ENCODE measurements at regions of chr2 and their contacts with region 1.

Region 1: DNA sequence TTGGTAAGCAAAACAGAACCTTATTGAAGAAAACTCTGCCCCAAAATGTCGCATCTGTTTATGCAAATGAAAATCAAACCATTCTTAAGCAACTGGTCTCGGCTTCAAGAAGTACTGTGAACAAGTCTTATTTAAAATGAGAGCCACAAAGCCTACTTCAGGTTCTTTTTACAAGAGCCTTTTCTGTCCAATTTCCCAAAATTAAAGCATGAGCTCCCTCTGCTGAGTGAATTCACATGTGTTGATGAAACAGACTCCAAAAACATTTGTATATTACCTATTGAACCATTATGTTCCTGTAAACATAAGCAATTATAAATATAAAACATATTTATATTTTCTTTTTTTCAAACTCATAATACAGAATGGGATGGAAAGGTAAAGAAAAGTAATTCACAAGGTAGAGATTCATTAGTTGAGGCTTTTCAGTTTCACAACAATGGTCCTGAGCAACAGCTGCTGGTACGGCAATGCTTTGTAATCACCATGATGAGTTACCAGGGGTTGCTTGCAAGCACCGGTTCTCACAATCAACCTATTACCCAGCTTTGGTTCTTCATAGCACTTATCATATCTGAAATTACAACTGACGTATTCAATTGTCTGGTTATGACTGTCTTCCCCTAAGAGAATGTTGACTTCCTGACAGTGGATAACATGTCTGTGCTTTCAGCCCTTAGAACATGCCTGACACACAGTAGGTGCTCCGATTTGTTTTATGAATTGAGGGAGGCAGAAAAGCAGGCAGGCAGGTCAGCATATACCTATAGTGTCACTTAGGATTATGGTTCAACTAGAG is 108.4 kb upstream of the BZW1 start:
- DNase-seq: peak; percentile 4
- H3K4me3 Mint-ChIP-seq: peak overlapping the region; percentile 35
- H3K27ac Mint-ChIP-seq: peak overlapping the region; percentile 82
- H3K4me1 Mint-ChIP-seq: peaks cover 48% of the 10 kb centered on the region
- H3K27me3 Mint-ChIP-seq: no peaks in the 10 kb centered on the region

Region 2: GRCh38 chr2:199955339-199956261 is 747.7 kb before region 1 on chr2 and contains the starts of genes MAIP1 and TYW5:
- intact Hi-C with region 1: loop called (anchors 5 kb)
- DNase-seq: peak; percentile 73
- H3K4me3 Mint-ChIP-seq: peak within 1 kb of the TSS; percentile 99
- H3K27ac Mint-ChIP-seq: peak within 1 kb of the TSS; percentile 93
- H3K4me1 Mint-ChIP-seq: peaks cover 62% of the 10 kb centered on the region
- H3K27me3 Mint-ChIP-seq: no peaks in the 10 kb centered on the region
- total RNA-seq, gene MAIP1: 24.7 and 27.1 TPM in 2 replicates
- total RNA-seq, gene TYW5: 11.7 and 13.9 TPM in 2 replicates

Region 3: DNA sequence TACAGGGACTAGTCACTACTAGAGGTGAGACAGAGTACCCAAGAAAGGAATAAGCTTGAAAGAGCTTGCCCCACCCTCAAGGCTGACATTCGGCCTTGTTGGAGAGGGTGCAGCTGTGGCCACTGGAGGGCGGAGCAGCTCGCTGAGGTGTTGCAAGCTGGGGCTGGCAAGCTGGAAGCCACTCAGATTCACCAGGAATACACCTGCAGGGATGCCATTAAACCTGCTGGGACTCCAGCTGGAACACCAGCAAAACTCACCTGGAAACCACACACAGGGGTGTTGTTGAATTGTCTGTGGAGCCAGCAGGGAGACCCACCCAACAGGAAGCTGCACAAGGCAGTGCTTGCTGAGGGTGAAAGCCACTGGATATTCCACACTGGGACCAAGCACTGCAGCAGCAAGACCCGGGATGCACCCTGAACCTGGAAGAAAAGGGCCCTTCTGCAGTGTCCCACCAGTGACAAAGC is 219.6 kb before region 1 on chr2:
- intact Hi-C with region 1: loop called (anchors 1 kb)
- DNase-seq: no peak
- H3K4me3 Mint-ChIP-seq: no peak overlapping the region
- H3K27ac Mint-ChIP-seq: no peak overlapping the region
- H3K4me1 Mint-ChIP-seq: peaks cover 7% of the 10 kb centered on the region
- H3K27me3 Mint-ChIP-seq: no peaks in the 10 kb centered on the region

Region 4: GRCh38 chr2:200509612-200510433 is 193.5 kb before region 1 on chr2 and contains the start of gene KCTD18:
- intact Hi-C with region 1: loop called (anchors 1 kb)
- DNase-seq: peak; percentile 90
- H3K4me3 Mint-ChIP-seq: peak within 1 kb of the TSS; percentile 96
- H3K27ac Mint-ChIP-seq: peak within 1 kb of the TSS; percentile 90
- H3K4me1 Mint-ChIP-seq: peaks cover 21% of the 10 kb centered on the region
- H3K27me3 Mint-ChIP-seq: no peaks in the 10 kb centered on the region
- total RNA-seq, gene KCTD18: 14.5 and 15.8 TPM in 2 replicates

Region 5: DNA sequence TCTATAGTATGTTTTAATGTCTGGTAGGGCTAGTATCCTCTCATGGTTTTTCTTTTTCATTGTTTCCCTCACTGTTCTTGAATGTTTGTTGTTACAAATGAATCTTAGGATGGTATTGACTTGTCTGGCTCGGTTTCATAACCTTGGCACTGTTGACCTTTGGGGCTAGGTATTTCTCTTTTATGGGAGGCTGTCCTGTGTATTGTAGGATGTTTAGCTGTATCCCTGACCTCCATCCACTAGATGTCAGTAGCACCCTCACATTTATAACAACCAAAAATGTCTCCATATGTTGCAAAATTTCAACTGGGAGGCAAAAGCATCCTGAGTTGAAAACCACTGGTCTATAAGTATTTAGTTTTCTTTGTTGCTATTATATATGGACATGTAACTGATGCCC is 124.5 kb before region 1 on chr2:
- intact Hi-C with region 1: loop called (anchors 1 kb)
- DNase-seq: no peak
- H3K4me3 Mint-ChIP-seq: no peak overlapping the region
- H3K27ac Mint-ChIP-seq: no peak overlapping the region
- H3K4me1 Mint-ChIP-seq: peaks cover 18% of the 10 kb centered on the region
- H3K27me3 Mint-ChIP-seq: no peaks in the 10 kb centered on the region

Region 6: DNA sequence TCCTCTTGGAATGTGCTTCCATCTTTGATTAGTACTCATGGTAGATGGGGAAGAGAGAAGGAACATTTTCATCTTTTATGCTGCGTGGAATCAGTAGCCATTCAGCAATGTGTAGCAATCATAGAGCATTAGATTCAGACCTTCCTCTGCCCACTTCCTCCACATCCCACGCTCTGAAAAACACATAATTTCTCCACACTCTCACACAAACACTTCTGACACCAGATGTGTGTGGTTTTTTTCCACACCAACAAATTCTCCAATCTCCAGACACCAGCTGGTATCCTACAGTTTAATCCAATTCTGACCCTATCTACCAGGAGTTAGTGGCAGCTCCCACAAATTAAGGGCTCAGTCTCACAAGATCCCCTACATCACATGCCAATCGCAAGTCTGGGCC is 14.2 kb before region 1 on chr2:
- intact Hi-C with region 1: no loop called
- DNase-seq: no peak
- H3K4me3 Mint-ChIP-seq: no peak overlapping the region
- H3K27ac Mint-ChIP-seq: peak overlapping the region; percentile 49
- H3K4me1 Mint-ChIP-seq: peaks cover 10% of the 10 kb centered on the region
- H3K27me3 Mint-ChIP-seq: peaks cover 3% of the 10 kb centered on the region

Region 7: GRCh38 chr2:200765139-200765951 is 62.0 kb after region 1 on chr2:
- intact Hi-C with region 1: loop called (anchors 1 kb)
- DNase-seq: no peak
- H3K4me3 Mint-ChIP-seq: no peak overlapping the region
- H3K27ac Mint-ChIP-seq: peak overlapping the region; percentile 82
- H3K4me1 Mint-ChIP-seq: peaks cover 29% of the 10 kb centered on the region
- H3K27me3 Mint-ChIP-seq: no peaks in the 10 kb centered on the region

Region 8: GRCh38 chr2:200888704-200889625 is 185.6 kb after region 1 on chr2 and contains the starts of genes NIF3L1 and PPIL3:
- intact Hi-C with region 1: loop called (anchors 1 kb)
- DNase-seq: peak; percentile 96
- H3K4me3 Mint-ChIP-seq: peak within 1 kb of the TSS; percentile 97
- H3K27ac Mint-ChIP-seq: peak within 1 kb of the TSS; percentile 99
- H3K4me1 Mint-ChIP-seq: peaks cover 54% of the 10 kb centered on the region
- H3K27me3 Mint-ChIP-seq: no peaks in the 10 kb centered on the region
- total RNA-seq, gene NIF3L1: 26.6 and 27.3 TPM in 2 replicates
- total RNA-seq, gene PPIL3: 44.2 TPM in 2 replicates

Measured in activated T-helper 1 cell treated with anti-CD3 and anti-CD28 coated beads, Interleukin-12 subunit alpha, Interleukin-12 subunit beta, Interleukin-2, Interleukin-4 antibody, amounts not matched to agents 30 ng/mL and 10 ng/mL and 1 ng/mL, durations not matched to agents 14 hours and 24 hours and 36 hours (primary cell).